ENCODE measurements at regions of chr6 and their contacts with region 1.

Region 1: GRCh38 chr6:3919130-3919628 is 70.0 kb downstream of the FAM50B start:
- DNase-seq: no peak
- ATAC-seq: no peak
- H3K4me3 ChIP-seq: no peak overlapping the region
- H3K4me3 Mint-ChIP-seq: no peak overlapping the region
- H3K27ac ChIP-seq: no peak overlapping the region
- H3K27ac Mint-ChIP-seq: no peak overlapping the region
- H3K4me1 ChIP-seq: peaks cover 19% of the 10 kb centered on the region
- H3K4me1 Mint-ChIP-seq: peaks cover 21% of the 10 kb centered on the region
- H3K27me3 ChIP-seq: no peaks in the 10 kb centered on the region
- H3K27me3 Mint-ChIP-seq: peaks cover 7% of the 10 kb centered on the region
- CTCF ChIP-seq: no peak

Region 2: DNA sequence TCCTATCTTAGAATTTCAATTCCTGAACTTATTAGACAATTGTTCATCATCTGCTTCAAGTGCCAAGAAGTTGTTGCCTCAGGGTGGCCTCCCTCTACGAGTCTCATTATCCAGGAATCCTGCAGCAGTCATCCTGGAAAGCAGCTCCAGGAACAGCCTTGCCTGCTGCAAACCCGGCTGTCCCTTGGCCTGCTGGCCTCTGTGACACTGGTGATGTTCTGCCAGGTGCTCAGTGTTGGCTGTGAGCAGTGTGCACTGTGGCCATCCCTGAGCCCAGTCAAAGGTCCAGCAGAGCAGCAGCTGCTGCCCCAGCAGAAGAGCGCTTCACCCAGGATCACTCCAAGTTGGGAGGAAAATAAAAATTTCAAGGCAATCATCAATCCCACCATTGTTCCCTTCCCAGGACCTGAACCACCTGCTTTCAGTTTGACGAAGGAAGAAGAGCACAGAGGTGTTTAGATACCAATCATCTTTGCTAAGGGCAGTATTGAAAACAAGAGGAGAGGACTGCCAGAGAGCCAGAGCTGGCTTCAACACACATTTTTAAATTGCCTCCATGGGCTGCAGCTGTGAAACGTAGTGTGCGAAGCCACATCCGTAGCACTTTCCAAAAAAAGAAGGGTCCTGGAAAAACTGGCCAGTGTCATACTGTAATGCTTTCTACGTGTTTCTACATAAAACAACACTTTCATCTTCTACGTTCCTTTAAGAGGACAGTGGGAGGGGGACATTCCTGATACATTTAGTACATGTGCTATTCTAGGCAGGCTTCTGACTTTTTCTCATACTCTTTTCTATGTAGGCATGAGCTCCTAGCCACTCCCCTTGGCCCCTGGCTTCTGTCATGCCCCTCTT is 77.2 kb before region 1 on chr6:
- CTCF ChIA-PET with region 1: no interaction called
- POLR2A ChIA-PET with region 1: no interaction called
- intact Hi-C with region 1: loop called in 1 of 2 experiments (anchors 5 kb)
- DNase-seq: no peak
- ATAC-seq: no peak
- H3K4me3 ChIP-seq: no peak overlapping the region
- H3K4me3 Mint-ChIP-seq: no peak overlapping the region
- H3K27ac ChIP-seq: no peak overlapping the region
- H3K27ac Mint-ChIP-seq: no peak overlapping the region
- H3K4me1 ChIP-seq: no peaks in the 10 kb centered on the region
- H3K4me1 Mint-ChIP-seq: no peaks in the 10 kb centered on the region
- H3K27me3 ChIP-seq: peaks cover 0 to 2% of the 10 kb centered on the region in 2 experiments
- H3K27me3 Mint-ChIP-seq: peaks cover 2% of the 10 kb centered on the region
- CTCF ChIP-seq: no peak

Measured in CD8-positive, alpha-beta T cell (primary cell).